ENCODE measurements at regions of chr13 and their contacts with region 1.

Region 1: DNA sequence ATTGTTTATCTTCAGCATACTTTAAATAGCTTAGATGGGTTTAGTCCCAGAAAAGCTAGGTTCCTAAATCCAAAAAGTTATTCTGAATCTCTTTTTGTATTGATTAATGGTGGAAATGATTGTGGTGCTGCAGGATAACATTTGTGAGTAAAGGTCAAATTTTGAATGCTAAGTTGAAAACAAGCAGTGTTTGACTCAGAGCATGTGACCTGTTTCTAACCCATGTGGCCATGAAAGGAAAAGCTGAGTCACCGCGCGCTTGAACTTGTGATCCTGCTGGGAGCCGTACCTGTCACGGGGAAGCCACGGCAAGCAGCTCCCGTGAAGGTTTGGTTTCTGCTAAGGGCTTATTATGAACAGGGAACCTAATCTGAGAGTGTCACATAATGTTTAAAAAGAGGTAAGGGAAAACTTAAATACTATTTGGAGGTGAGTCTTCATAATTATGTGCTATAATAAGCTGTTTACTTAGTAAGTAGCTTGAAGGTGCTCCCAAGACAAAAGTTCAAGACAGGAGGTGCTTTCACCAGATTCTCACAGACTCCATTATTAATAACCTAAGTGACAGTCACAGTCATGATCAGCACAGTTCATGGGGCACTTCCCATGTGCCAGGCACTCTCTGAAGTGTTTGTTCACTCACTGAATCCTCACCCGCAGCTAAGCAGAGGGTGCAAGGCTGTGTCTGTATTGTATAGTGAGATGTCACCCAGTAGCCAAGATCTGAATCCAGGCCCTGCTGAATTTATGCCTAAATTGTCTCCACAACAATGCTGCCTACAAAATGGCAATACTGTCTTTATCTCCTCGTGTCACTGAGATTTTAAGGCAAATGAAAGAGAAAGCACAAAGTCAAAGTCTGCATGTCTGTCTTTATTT is 286.5 kb downstream of the MYO16 start:
- DNase-seq: peak; percentile 71
- CTCF ChIP-seq: no peak

Region 2: GRCh38 chr13:108895220-108895704 is 20.6 kb before region 1 on chr13:
- CTCF ChIA-PET with region 1: interaction called, 69 read pairs
- POLR2A ChIA-PET with region 1: no interaction called
- DNase-seq: no peak
- CTCF ChIP-seq: peak; percentile 62